Transverse colon (tissue), 4 donors: ENCODE measurements at regions of chr19 and their contacts with region 1.

Region 1: DNA sequence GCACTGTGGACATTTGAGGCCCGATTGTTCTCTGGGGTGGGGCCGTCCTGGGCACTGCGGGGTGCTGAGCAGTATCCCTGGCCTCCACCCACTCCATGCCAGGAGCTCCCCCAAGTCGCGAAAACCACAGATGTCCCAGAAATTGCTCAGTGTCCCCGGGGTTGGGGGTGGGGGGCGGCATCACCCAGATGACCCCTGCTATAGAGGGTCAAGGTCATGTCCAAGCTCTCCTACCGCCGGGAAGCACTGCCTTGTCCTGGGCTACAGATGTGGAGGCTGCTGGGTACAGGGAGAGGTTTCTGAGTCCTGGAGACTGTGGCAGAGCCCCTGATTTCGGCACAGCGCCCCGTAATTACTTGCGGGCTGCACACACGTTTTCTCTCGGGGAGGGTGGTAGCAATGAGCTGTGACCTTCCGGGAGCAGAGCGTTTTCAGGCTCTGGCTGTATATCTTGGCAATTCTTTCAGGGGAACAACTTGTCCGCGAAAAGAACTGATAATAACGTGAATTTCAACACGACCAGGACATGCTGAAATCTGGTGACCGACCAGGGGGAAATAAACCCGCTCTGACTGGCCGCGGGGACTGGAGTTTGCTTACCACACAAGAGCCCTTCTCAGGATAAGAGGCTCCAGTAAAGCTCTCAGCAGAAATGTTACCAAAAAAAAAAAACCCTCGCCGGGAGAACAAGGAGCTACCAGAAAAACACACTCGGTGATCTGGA is 68.1 kb downstream of the GNG7 start:
- DNase-seq: no peak
- H3K4me3 ChIP-seq: no peak overlapping the region
- H3K27ac ChIP-seq: peak overlapping the region in 2 of 4 donors; percentile 34 to 57
- H3K4me1 ChIP-seq: peaks cover 5 to 14% (median 8%) of the 10 kb centered on the region in 4 donors
- H3K27me3 ChIP-seq: no peaks in the 10 kb centered on the region
- CTCF ChIP-seq: no peak
- EP300 ChIP-seq: no peak
- POLR2A ChIP-seq: no peak

Region 2: DNA sequence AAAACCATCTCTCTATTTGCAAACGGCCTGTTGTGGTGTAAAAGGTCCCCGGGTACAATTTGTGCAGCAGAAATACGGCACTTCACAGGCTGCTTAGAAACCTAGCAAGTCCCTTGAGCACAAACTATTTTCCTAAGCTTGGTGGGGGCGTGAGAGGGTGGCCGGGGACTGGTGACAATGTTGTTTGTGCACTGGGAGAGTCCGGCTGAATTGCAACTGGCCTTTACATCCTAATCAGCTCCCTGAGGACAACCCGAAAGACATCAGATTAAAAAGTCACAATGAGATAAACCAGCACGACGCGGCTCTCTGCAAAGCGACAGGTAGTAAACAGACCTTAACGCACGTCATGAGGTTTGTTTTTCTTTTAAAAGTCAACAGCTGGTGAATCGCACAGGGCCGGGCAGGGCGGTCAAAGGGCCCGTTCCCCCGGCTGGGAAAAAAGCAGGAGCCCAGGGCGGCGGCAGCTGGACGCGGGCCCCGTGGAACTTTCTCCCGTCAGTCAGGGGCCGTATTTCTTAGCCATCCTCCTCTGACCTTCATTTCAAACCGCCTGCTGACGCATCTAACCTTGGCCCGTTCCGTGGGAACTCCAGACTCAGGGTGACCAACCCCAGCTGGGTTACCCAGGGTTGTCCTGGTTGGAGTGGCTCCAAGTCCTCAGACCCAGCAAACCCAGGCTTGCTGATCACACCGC is 46.2 kb before region 1 on chr19:
- in situ Hi-C with region 1: no loop called
- intact Hi-C with region 1: loop called (anchors 1 kb)
- DNase-seq: peak; percentile 70
- H3K4me3 ChIP-seq: no peak overlapping the region
- H3K27ac ChIP-seq: peak overlapping the region; percentile 41 to 69 (median 51)
- H3K4me1 ChIP-seq: peaks cover 0 to 30% (median 12%) of the 10 kb centered on the region in 4 donors
- H3K27me3 ChIP-seq: no peaks in the 10 kb centered on the region
- CTCF ChIP-seq: no peak
- EP300 ChIP-seq: no peak
- POLR2A ChIP-seq: no peak